Calu3 (cell line): ENCODE measurements at regions of chr3 and their contacts with region 1.

Region 1: GRCh38 chr3:155714295-155714718 is 30.6 kb downstream of the PLCH1 start:
- DNase-seq: peak; percentile 36
- H3K4me3 Mint-ChIP-seq: no peak overlapping the region
- H3K27ac Mint-ChIP-seq: no peak overlapping the region
- H3K4me1 Mint-ChIP-seq: peaks cover 9% of the 10 kb centered on the region
- H3K27me3 Mint-ChIP-seq: no peaks in the 10 kb centered on the region
- CTCF ChIP-seq: no peak

Region 2: GRCh38 chr3:155737844-155738460 is 23.6 kb after region 1 on chr3:
- CTCF ChIA-PET with region 1: interaction called, 11 read pairs
- intact Hi-C with region 1: no loop called
- DNase-seq: peak; percentile 88
- H3K4me3 Mint-ChIP-seq: peak overlapping the region; percentile 88
- H3K27ac Mint-ChIP-seq: peak overlapping the region; percentile 98
- H3K4me1 Mint-ChIP-seq: peaks cover 39% of the 10 kb centered on the region
- H3K27me3 Mint-ChIP-seq: no peaks in the 10 kb centered on the region
- CTCF ChIP-seq: no peak